ENCODE measurements at regions of chr21 and their contacts with region 1.

Region 1: GRCh38 chr21:36141513-36141925 is 6.6 kb downstream of the CBR3 start:
- DNase-seq: peak; percentile 70 to 83
- H3K4me3 ChIP-seq: no peak overlapping the region
- H3K27ac ChIP-seq: no peak overlapping the region
- H3K4me1 ChIP-seq: peaks cover 0 to 6% (median under 1%) of the 10 kb centered on the region in 4 experiments; a peak in 3 of 7 replicates
- H3K27me3 ChIP-seq: peaks cover 0 to 4% (median 2%) of the 10 kb centered on the region in 4 experiments; a peak in 4 of 7 replicates
- CTCF ChIP-seq: peak; percentile 43 to 96 (median 93)
- EP300 ChIP-seq: no peak
- POLR2A ChIP-seq: no peak
- RAD21 ChIP-seq: peak; percentile 94 to 98

Region 2: DNA sequence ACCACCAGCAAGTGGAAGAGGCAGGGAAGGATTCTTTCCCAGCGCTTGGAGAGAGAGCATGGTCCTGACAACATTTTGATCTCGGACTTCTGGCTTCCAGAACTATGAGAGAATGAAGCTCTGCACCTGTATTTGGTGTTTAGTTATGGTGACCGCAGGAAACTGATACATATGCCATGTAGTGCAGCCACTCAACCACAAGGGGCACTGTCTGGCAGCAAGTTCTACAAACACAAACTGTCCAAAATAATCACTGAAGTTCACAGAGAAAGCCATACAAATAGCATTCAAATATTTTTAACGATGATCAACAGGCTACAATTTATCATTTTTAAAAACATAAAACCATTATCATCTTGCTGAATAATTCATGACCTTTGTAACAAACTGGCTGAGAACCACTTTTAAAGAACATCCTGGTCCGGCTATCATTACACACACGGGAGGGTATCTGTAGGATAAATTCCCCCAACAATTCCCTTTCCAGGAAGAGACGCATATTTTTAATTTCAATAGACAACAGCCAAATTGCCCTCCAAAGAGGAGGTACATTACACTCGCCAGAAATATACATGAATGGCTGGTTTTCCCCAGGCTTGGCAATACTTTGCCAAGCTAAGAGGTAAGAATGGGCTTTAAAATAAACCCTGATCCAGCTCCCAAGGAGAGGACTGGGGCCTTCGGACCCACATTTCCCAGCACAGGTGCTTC is 15.9 kb before region 1 on chr21:
- CTCF ChIA-PET with region 1: interaction called, 25 read pairs
- POLR2A ChIA-PET with region 1: interaction called, 5 read pairs
- DNase-seq: peak in 1 of 2 experiments; percentile 71
- H3K4me3 ChIP-seq: no peak overlapping the region
- H3K27ac ChIP-seq: no peak overlapping the region
- H3K4me1 ChIP-seq: peaks cover 0 to 3% (median 0%) of the 10 kb centered on the region in 4 experiments; a peak in 2 of 7 replicates
- H3K27me3 ChIP-seq: peaks cover 0 to 3% (median 0%) of the 10 kb centered on the region in 4 experiments; a peak in 2 of 7 replicates
- CTCF ChIP-seq: peak; percentile 60 to 94 (median 62)
- EP300 ChIP-seq: no peak
- POLR2A ChIP-seq: no peak
- RAD21 ChIP-seq: peak; percentile 50 to 56

Region 3: DNA sequence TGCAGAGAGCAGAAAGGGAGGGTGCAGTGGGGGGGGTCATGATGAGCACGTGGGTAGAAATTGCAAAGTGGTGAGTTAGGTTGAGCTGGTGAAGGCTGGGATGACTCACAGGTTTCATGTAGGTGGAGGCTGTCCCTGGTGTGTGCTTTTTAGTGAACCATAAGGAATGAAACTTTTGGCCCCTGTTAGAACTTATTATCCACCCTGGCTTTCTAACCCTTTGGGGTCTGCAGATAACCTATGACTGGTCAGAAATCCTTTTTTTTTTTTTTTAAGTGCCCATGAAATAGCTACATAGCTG is 62.0 kb after region 1 on chr21:
- CTCF ChIA-PET with region 1: interaction called, 68 read pairs
- POLR2A ChIA-PET with region 1: interaction called, 3 read pairs
- DNase-seq: no peak
- H3K4me3 ChIP-seq: no peak overlapping the region
- H3K27ac ChIP-seq: no peak overlapping the region
- H3K4me1 ChIP-seq: no peaks in the 10 kb centered on the region
- H3K27me3 ChIP-seq: no peaks in the 10 kb centered on the region
- CTCF ChIP-seq: no peak
- EP300 ChIP-seq: no peak
- POLR2A ChIP-seq: no peak
- RAD21 ChIP-seq: no peak

Region 4: DNA sequence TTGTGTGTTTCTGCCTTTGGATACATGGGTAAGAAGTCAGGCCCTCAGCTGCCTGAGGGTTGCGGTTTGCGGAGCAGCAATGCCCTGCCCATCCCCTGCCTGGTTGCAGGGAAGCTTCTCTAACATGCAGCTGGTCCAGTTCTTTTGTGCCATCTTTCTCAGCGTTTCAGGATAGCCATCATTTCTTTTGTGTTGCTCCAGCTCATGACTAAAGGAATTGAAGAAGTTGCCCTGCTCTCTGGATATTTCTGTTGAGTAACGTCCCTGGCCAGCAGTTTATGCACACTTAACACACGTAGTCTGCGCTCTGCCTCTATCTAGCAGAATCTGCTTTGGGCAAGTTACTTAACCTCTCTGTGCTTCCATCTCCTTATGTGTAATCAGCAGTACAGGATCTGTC is 77.2 kb after region 1 on chr21:
- CTCF ChIA-PET with region 1: interaction called, 10 read pairs
- POLR2A ChIA-PET with region 1: no interaction called
- DNase-seq: no peak
- H3K4me3 ChIP-seq: no peak overlapping the region
- H3K27ac ChIP-seq: no peak overlapping the region
- H3K4me1 ChIP-seq: no peaks in the 10 kb centered on the region
- H3K27me3 ChIP-seq: no peaks in the 10 kb centered on the region
- CTCF ChIP-seq: no peak
- EP300 ChIP-seq: no peak
- POLR2A ChIP-seq: no peak
- RAD21 ChIP-seq: no peak